Activated T-helper 1 cell treated with anti-CD3 and anti-CD28 coated beads, Interleukin-12 subunit alpha, Interleukin-12 subunit beta, Interleukin-2, Interleukin-4 antibody, amounts not matched to agents 30 ng/mL and 10 ng/mL and 1 ng/mL, durations not matched to agents 14 hours and 24 hours and 36 hours (primary cell): ENCODE measurements at regions of chr13 and their contacts with region 1.

Region 1: DNA sequence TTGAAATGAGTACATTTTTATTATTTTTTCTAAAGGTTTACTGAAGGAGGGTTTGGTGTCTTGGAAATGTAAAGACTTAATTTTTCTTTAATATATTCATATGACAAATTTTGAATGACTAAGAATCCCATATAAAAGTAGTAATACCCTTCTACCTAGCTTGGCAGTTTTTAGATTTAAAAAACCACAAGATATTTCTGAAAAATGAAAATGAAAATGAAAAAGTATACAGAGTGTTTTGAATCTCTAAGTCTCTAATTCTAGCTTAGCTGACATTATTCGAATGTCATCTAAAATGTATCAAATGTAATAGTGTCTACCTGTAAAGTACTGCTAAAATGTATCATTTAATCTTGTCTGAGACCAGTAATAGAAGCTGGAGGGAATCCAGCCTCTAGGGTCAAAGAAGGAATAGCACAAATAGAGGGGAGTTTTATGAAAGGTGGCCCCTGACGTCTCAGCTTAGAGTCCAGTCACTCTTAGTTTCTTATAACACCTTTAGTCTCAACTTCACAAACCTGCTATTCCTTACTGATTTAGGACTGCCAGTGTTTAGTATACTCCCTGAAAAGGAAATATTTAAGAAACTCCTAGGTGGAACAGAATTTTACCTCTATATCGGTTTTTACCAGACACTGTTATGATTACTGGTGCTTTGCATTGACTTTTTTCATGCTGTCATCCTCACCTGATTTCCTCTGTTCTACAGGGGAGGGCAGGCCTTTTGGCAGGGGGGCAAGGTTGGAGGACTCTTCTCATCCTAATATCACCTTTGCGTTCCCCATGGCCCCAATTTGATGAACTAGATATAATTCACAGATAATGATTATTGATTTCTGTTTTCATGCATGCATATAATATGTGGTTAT is 16.2 kb upstream of the MIR17HG start:
- DNase-seq: no peak
- H3K4me3 Mint-ChIP-seq: peak overlapping the region; percentile 26
- H3K27ac Mint-ChIP-seq: no peak overlapping the region
- H3K4me1 Mint-ChIP-seq: peaks cover 19% of the 10 kb centered on the region
- H3K27me3 Mint-ChIP-seq: no peaks in the 10 kb centered on the region

Region 2: DNA sequence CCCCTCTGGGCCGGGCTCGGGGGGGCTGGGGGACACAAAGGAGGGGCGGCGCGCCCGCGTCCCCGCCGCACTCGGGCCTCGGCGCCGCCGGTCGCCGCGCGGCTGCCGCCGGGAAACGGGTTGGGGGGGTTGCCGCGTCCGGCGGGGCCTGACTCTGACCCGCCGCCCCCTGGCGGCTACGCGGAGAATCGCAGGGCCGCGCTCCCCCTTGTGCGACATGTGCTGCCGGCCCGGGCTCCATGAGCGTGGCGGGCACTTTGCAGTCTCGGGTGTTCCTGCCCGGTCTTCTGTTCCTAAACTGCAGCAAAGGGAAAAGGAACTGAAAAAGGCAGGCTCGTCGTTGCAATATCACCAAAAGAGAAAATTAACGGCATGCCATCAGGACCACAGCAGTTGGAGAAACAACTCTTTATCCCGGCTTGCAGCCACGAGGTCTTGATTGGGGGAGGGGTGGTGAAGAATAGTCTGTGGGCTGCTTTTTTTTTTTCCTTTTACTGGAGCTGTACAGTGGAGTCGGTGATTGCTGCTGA is 17.7 kb after region 1 on chr13:
- intact Hi-C with region 1: loop called (anchors 1 kb)
- DNase-seq: peak; percentile 91
- H3K4me3 Mint-ChIP-seq: peak overlapping the region; percentile 99
- H3K27ac Mint-ChIP-seq: peak overlapping the region; percentile 98
- H3K4me1 Mint-ChIP-seq: peaks cover 53% of the 10 kb centered on the region
- H3K27me3 Mint-ChIP-seq: no peaks in the 10 kb centered on the region